MCF 10A (cell line): ENCODE measurements at regions of chr12 and their contacts with region 1.

Region 1: GRCh38 chr12:63843721-63844390 is 644 bp upstream of the SRGAP1 start:
- DNase-seq: peak; percentile 92
- H3K4me3 Mint-ChIP-seq: peak overlapping the region; percentile 99
- H3K27ac Mint-ChIP-seq: peak overlapping the region; percentile 96
- H3K4me1 Mint-ChIP-seq: peaks cover 13% of the 10 kb centered on the region
- H3K27me3 Mint-ChIP-seq: no peaks in the 10 kb centered on the region
- CTCF ChIP-seq: peak; percentile 96

Region 2: DNA sequence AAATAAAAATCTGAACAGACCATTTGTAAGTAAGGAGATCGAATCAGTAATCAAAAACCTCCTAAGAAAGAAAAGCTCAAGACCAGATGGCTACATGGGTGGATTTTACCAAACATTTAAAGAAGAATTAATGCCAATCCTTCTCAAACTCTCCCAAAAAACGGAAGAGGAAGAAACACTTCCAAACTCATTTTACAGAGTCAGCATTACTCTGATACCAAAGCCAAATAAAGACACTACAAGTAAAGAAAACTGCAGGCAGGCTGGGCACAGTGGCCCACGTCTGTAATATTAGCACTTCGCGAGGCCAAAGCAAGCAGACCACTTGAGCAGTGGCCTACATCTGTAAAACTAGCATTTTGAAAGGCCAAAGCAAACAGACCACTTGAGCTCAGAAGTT is 335.3 kb before region 1 on chr12:
- CTCF ChIA-PET with region 1: no interaction called
- POLR2A ChIA-PET with region 1: no interaction called
- intact Hi-C with region 1: no loop called
- DNase-seq: no peak
- H3K4me3 Mint-ChIP-seq: no peak overlapping the region
- H3K27ac Mint-ChIP-seq: no peak overlapping the region
- H3K4me1 Mint-ChIP-seq: no peaks in the 10 kb centered on the region
- H3K27me3 Mint-ChIP-seq: peaks cover 79% of the 10 kb centered on the region
- CTCF ChIP-seq: no peak

Region 3: DNA sequence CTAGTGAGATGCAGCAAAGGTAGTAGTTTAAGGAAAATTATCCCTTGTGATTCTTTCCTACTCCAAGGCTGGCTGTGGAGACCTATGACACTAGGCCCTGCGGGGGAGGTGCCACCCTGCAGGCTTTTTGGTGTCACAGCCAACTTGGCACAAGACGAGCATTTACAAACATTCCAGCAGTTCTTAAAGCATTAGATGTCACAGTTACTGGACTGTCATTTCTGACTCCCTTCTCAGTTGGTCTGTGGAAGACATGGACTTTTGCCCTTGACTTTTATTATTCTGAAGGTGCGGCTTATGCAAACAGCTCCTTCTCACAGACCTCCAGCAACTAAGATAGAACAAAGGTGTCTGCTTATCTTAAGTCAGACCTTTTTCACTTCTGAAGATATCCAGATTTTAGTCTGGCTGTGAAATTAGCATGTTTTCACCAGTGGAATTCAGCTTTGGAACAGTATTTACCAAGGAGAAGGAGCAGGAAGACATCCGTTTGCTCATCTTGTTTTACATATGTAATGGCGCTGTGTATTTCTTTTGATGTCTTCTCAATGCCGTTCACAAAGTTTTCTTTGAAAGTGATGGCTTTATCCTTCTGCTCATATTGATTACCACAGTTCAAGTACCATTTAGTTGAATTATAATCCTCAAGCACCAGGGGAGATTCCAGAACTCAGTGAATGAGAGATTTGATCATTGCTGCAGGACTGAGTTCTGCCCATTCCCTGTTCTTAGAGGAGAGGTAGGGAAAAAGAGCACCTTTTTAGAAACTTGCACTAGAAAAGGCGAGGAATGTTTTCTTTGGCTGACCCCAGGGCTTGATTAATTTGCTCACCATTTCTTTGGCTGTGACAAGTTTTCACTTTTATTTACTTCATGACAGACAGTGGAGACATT is 18.6 kb after region 1 on chr12:
- CTCF ChIA-PET with region 1: interaction called, 6 read pairs
- POLR2A ChIA-PET with region 1: interaction called, 10 read pairs
- intact Hi-C with region 1: no loop called
- DNase-seq: peak; percentile 59
- H3K4me3 Mint-ChIP-seq: peak overlapping the region; percentile 35
- H3K27ac Mint-ChIP-seq: peak overlapping the region; percentile 84
- H3K4me1 Mint-ChIP-seq: peaks cover 23% of the 10 kb centered on the region
- H3K27me3 Mint-ChIP-seq: no peaks in the 10 kb centered on the region
- CTCF ChIP-seq: no peak

Region 4: GRCh38 chr12:63955831-63956609 is 112.2 kb after region 1 on chr12:
- CTCF ChIA-PET with region 1: interaction called, 7 read pairs
- POLR2A ChIA-PET with region 1: interaction called, 13 read pairs
- intact Hi-C with region 1: no loop called
- DNase-seq: peak; percentile 78
- H3K4me3 Mint-ChIP-seq: peak overlapping the region; percentile 39
- H3K27ac Mint-ChIP-seq: peak overlapping the region; percentile 88
- H3K4me1 Mint-ChIP-seq: peaks cover 31% of the 10 kb centered on the region
- H3K27me3 Mint-ChIP-seq: no peaks in the 10 kb centered on the region
- CTCF ChIP-seq: no peak

Region 5: GRCh38 chr12:64039281-64039871 is 195.5 kb after region 1 on chr12:
- CTCF ChIA-PET with region 1: interaction called, 10 read pairs
- POLR2A ChIA-PET with region 1: interaction called, 16 read pairs
- intact Hi-C with region 1: loop called (anchors 1 kb)
- DNase-seq: peak; percentile 36
- H3K4me3 Mint-ChIP-seq: peak overlapping the region; percentile 64
- H3K27ac Mint-ChIP-seq: peak overlapping the region; percentile 86
- H3K4me1 Mint-ChIP-seq: peaks cover 20% of the 10 kb centered on the region
- H3K27me3 Mint-ChIP-seq: no peaks in the 10 kb centered on the region
- CTCF ChIP-seq: no peak

Region 6: GRCh38 chr12:64099397-64099796 is 255.5 kb after region 1 on chr12:
- CTCF ChIA-PET with region 1: interaction called, 17 read pairs
- POLR2A ChIA-PET with region 1: interaction called, 34 read pairs
- intact Hi-C with region 1: loop called (anchors 1 kb)
- DNase-seq: peak; percentile 85
- H3K4me3 Mint-ChIP-seq: no peak overlapping the region
- H3K27ac Mint-ChIP-seq: peak overlapping the region; percentile 54
- H3K4me1 Mint-ChIP-seq: peaks cover 34% of the 10 kb centered on the region
- H3K27me3 Mint-ChIP-seq: no peaks in the 10 kb centered on the region
- CTCF ChIP-seq: no peak

Region 7: DNA sequence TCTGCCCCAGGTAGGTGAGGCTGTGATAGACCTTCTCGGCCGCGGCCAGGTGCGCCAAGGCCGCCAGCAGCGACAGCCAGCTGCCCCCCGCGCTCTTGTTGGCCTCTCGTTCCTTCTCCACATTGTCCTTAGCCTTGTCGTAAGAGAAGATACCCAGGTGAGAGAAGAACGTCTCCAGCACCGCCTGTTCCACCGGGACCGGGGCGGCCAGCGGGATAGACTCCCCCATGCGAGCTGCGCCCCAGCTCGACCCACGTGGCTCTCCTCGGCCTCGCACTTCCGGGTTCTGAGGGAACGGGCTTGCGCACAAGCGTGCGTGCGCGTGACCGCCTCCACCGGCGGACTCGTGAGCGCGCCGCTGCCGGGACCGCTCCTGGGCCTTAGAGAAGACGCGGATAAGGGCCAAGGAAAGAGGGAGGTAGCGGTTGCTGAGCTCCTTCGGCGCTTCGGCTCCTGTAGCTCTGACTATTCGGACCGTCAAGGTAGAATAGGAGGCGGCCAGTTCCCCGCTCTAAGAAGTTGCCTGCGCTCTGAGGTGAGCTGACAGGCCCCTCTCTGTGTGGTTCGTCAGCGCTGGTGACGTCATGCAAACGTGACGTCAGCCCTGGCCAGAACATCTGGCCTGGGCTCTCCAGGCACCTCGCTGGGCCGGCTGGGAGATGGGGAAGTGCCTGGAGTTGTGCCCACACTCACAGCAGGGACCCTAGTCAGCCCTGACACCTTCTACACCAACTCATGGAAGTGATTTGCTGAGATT is 378.3 kb after region 1 on chr12 and contains the start of gene KICS2:
- CTCF ChIA-PET with region 1: interaction called, 14 read pairs
- POLR2A ChIA-PET with region 1: interaction called, 50 read pairs
- intact Hi-C with region 1: loop called (anchors 1 kb)
- DNase-seq: peak; percentile 94
- H3K4me3 Mint-ChIP-seq: peak within 1 kb of the TSS; percentile 83
- H3K27ac Mint-ChIP-seq: peak within 1 kb of the TSS; percentile 88
- H3K4me1 Mint-ChIP-seq: peaks cover 18% of the 10 kb centered on the region
- H3K27me3 Mint-ChIP-seq: no peaks in the 10 kb centered on the region
- CTCF ChIP-seq: no peak
- total RNA-seq, gene KICS2: 9.5 and 11.9 TPM in 2 replicates